Lower leg skin (tissue), 4 donors: ENCODE measurements at regions of chr6 and their contacts with region 1.

Region 1: GRCh38 chr6:164889980-164890379 is 419.4 kb downstream of the C6orf118 start:
- DNase-seq: no peak
- H3K4me3 ChIP-seq: no peak overlapping the region
- CTCF ChIP-seq: no peak
- POLR2A ChIP-seq: no peak

Region 2: GRCh38 chr6:164929408-164929977 is 39.5 kb after region 1 on chr6:
- intact Hi-C with region 1: loop called (anchors 1 kb)
- DNase-seq: no peak
- H3K4me3 ChIP-seq: no peak overlapping the region
- CTCF ChIP-seq: no peak
- POLR2A ChIP-seq: no peak